Sciatic nerve (tissue), 2 donors: ENCODE measurements at regions of chr5 and their contacts with region 1.

Region 1: DNA sequence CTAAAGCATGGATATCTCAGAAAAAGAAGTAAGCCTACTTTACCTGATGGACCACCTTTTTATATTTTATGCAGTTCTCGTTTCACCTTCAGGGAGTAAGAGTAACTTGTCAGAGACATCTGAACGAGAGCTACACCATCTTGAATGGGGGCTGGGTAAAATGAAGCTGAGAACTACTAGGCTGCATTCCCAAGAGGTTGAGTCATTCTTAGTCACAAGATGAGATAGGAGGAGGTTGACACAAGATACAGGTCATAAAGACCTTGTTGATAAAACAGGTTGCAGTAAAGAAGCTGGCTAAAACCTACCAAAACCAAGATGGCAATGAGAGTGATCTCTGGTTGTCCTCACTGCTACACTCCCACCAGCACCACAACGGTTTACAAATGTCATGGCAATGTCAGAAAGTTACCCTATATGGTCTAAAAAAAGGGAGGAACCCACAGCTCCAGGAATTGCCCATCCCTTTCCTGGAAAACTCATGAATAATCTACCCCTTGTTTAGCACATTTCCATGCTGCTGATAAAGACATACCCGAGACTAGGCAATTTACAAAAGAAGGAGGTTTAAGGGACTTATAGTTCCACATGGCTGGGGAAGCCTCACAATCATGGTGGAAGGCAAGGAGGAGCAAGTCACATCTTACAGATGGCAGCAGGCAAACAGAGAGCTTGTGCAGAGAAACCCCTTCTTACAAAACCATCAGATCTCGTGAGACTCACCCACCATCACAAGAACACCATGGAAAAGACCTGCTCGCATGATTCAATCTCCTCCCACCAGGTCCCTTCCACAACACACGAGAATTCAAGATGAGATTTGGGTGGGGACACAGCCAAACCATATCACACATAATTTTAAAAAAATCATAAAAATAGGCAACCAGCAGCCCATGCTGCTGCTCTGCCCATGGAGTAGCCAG is 62.5 kb downstream of the GIN1 start:
- DNase-seq: no peak
- ATAC-seq: no peak

Region 2: GRCh38 chr5:101751105-101751504 is 1306.4 kb before region 1 on chr5:
- intact Hi-C with region 1: loop called (anchors 5 kb)
- DNase-seq: no peak
- ATAC-seq: no peak

Region 3: DNA sequence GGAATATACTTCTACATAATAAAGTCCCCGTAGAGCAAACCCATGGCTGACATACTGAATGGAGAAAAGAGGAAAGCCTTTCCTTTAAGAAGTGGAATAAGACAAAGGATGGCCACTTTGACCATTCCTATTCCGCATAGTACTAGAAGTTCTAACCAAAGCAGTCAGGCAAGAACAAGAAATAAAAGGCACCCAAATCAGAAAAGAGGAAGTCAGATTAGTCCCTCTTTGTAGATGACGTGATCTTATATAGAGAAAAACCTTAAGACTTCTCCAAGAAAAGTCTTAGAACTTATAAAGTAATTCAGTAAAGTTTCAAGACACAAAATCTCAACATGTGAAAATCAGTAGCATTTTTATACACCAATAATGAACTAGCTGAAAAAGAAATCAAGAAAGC is 71.4 kb before region 1 on chr5:
- intact Hi-C with region 1: no loop called
- DNase-seq: no peak
- ATAC-seq: no peak

Region 4: GRCh38 chr5:103098993-103099392 is 41.5 kb after region 1 on chr5:
- intact Hi-C with region 1: no loop called
- DNase-seq: no peak
- ATAC-seq: no peak